Activated B cell treated with CpG ODN at 0.5 μM for 24 hours (primary cell): ENCODE measurements at regions of chr17 and their contacts with region 1.

Region 1: DNA sequence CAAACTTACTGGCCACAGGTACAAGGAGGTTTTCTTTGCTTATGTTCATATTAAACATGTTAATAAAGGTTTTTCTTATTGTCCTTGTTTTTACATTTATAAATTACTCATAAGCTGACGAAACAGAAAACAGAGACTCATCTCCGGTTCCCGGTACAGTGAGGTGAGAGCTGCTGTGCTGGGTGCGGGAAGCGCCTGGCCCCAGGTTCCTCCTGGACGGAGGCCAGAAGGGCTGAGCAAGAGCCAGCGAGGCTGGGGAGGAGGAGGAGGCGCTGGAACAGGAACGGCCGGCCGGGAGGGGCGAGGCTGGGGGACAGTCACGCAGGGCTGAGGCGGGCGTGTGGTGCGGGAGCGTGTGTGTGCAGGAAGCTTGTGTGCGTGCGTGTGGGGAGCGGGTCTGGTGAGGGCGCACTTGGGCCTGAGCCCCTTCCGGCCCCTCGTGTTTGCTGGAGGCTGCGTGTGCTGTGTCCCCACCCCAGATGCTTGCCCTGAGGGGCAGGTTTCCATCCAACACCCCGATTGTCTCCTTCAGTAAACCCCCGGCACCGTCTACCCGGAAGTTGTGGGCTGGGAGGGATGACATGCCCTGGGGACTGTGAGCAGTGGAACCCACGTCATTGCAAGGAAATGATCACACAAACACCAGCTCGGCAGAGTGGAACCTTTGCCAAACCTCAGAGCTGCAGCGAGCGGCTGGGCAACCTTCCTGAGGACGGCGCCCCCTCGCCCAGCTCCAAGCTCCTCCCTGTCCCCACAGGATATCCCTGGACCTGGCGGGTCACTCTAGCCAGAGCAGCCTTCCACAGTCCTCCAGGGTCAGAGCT is 19.5 kb downstream of the CD7 start:
- DNase-seq: peak; percentile 81
- ATAC-seq: peak; percentile 75
- H3K4me3 Mint-ChIP-seq: peak overlapping the region; percentile 97
- H3K27ac Mint-ChIP-seq: peak overlapping the region; percentile 100
- H3K4me1 Mint-ChIP-seq: peaks cover 76% of the 10 kb centered on the region
- H3K27me3 Mint-ChIP-seq: no peaks in the 10 kb centered on the region
- CTCF ChIP-seq: no peak

Region 2: GRCh38 chr17:82098072-82098821 is 199.7 kb before region 1 on chr17 and contains the start of gene FASN:
- CTCF ChIA-PET with region 1: no interaction called
- POLR2A ChIA-PET with region 1: interaction called, 14 read pairs
- intact Hi-C with region 1: loop called (anchors 1 kb)
- DNase-seq: peak; percentile 90
- ATAC-seq: peak; percentile 78
- H3K4me3 Mint-ChIP-seq: peak within 1 kb of the TSS; percentile 73
- H3K27ac Mint-ChIP-seq: no peak within 1 kb of the TSS
- H3K4me1 Mint-ChIP-seq: peaks cover 16% of the 10 kb centered on the region
- H3K27me3 Mint-ChIP-seq: no peaks in the 10 kb centered on the region
- CTCF ChIP-seq: no peak
- total RNA-seq, gene FASN: 104 and 121 TPM in 2 replicates

Region 3: DNA sequence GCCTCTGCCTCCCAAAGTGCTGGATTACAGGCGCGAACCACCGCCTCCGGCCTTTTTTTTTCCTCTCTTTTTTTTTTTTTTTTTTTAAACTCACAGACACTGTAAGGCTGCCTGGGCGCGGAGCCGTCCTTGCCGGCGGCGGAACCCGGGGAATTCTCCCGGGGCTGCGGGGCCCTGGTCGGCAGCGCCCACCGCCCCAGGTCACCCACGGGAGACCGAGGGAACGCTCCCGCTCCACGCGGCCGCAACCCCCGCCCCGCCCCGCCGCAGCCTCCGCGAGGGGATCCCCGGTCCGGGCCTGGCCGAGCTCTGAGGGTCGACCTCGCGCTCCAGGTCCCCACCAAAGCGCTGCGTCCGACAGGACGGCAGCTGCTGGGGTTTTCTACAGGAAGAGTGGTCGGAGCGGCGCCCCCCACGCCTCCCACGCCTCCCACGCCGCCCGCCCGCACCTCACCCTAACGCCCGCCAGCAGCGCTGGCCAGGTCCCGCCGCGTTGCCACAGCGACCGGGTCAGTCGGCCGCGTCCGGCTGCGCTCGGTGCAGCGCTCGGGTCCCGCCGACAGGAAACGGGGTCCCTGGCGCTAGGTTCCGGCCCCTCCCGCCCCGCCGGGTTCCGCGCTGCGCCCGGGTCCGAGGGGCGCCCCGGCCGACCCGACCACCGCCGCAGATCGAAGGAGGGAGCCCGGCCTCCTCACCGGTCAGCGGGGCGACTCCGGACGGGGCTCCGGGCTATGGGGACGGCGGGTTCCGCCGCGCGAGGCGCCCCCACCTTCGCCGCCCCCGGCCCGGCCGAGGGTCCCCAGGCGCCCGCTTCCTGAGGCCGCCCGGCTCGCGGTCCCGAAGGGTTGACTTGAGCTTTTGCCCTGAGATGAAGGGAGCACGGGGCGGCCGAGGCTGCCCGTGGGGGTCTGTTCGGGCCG is 85.3 kb before region 1 on chr17 and contains the start of gene CCDC57:
- CTCF ChIA-PET with region 1: no interaction called
- POLR2A ChIA-PET with region 1: interaction called, 28 read pairs
- intact Hi-C with region 1: loop called (anchors 1 kb)
- DNase-seq: peak; percentile 78
- ATAC-seq: peak; percentile 73
- H3K4me3 Mint-ChIP-seq: peak within 1 kb of the TSS; percentile 84
- H3K27ac Mint-ChIP-seq: peak within 1 kb of the TSS; percentile 91
- H3K4me1 Mint-ChIP-seq: peaks cover 43% of the 10 kb centered on the region
- H3K27me3 Mint-ChIP-seq: no peaks in the 10 kb centered on the region
- CTCF ChIP-seq: no peak
- total RNA-seq, gene CCDC57: 56.6 TPM in 2 replicates

Region 4: DNA sequence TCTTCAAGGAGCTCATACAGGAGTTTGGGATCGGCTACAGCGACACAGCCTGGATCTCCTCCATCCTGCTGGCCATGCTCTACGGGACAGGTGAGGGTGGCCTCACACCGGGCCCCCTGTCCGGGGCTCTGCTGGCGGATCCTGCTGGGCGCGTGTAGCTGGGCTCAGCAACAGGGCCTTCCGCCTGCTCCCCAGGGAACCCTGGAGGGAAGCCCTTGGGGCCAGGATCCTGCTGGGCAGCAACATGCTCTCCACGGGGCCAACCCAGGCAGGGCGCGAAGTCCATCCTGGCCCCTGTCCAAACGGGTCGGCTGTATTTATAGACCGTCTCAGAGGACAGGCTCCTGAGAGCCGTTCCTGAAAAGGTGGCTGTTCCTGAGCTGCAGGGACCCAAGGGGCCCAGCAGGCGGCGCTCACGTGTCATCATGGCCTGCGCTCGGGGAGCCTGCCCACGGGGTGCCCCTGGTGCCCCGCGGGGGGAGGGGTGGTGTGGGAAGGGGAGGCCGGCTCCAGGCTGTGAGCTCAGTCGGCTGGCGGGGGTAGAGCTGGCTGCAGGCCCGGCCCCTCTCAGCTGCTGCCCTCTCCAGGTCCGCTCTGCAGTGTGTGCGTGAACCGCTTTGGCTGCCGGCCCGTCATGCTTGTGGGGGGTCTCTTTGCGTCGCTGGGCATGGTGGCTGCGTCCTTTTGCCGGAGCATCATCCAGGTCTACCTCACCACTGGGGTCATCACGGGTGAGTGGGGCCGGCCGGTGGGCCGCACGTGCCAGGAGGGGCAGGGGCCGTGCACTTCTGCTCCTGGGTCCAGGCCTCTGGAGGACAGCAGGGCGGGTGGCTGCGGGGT is 61.6 kb before region 1 on chr17:
- CTCF ChIA-PET with region 1: interaction called, 12 read pairs
- POLR2A ChIA-PET with region 1: interaction called, 7 read pairs
- intact Hi-C with region 1: no loop called
- DNase-seq: peak; percentile 58
- ATAC-seq: peak; percentile 64
- H3K4me3 Mint-ChIP-seq: no peak overlapping the region
- H3K27ac Mint-ChIP-seq: no peak overlapping the region
- H3K4me1 Mint-ChIP-seq: peaks cover 53% of the 10 kb centered on the region
- H3K27me3 Mint-ChIP-seq: no peaks in the 10 kb centered on the region
- CTCF ChIP-seq: no peak

Region 5: DNA sequence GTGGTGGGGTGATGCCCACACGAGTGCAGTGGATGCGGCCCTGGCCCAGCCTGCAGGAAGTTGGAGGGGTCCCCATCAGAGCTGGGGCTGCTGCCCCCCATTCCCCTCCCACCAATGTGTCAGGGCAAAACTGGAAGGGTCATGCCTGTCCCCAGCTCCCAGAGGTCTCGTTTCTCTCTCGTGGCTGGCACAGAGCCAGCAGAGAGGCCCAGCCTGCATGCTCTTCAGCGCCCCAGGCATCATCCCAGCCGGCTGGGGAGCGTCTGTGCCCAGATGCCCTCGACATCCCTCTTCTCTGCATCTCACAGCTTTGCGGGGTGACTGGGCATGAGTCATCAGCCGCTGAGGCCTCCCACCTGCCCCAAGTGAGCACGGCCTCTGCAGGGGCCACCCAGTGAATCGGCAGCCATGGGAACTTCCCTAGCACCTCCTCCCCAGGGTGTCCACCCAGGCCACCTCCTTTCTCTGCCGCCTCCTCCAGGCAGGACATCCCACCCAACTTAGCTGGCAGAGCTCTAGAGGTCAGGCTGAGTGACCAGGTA is 14.6 kb before region 1 on chr17:
- CTCF ChIA-PET with region 1: no interaction called
- POLR2A ChIA-PET with region 1: interaction called, 19 read pairs
- intact Hi-C with region 1: no loop called
- DNase-seq: no peak
- ATAC-seq: no peak
- H3K4me3 Mint-ChIP-seq: no peak overlapping the region
- H3K27ac Mint-ChIP-seq: no peak overlapping the region
- H3K4me1 Mint-ChIP-seq: peaks cover 8% of the 10 kb centered on the region
- H3K27me3 Mint-ChIP-seq: peaks cover 2% of the 10 kb centered on the region
- CTCF ChIP-seq: no peak

Region 6: GRCh38 chr17:82320956-82321927 is 23.3 kb after region 1 on chr17:
- CTCF ChIA-PET with region 1: interaction called, 58 read pairs
- POLR2A ChIA-PET with region 1: interaction called, 40 read pairs
- intact Hi-C with region 1: loop called (anchors 1 kb)
- DNase-seq: peak; percentile 76
- ATAC-seq: peak; percentile 81
- H3K4me3 Mint-ChIP-seq: peak overlapping the region; percentile 73
- H3K27ac Mint-ChIP-seq: peak overlapping the region; percentile 56
- H3K4me1 Mint-ChIP-seq: peaks cover 3% of the 10 kb centered on the region
- H3K27me3 Mint-ChIP-seq: peaks cover 6% of the 10 kb centered on the region
- CTCF ChIP-seq: peak; percentile 48

Region 7: DNA sequence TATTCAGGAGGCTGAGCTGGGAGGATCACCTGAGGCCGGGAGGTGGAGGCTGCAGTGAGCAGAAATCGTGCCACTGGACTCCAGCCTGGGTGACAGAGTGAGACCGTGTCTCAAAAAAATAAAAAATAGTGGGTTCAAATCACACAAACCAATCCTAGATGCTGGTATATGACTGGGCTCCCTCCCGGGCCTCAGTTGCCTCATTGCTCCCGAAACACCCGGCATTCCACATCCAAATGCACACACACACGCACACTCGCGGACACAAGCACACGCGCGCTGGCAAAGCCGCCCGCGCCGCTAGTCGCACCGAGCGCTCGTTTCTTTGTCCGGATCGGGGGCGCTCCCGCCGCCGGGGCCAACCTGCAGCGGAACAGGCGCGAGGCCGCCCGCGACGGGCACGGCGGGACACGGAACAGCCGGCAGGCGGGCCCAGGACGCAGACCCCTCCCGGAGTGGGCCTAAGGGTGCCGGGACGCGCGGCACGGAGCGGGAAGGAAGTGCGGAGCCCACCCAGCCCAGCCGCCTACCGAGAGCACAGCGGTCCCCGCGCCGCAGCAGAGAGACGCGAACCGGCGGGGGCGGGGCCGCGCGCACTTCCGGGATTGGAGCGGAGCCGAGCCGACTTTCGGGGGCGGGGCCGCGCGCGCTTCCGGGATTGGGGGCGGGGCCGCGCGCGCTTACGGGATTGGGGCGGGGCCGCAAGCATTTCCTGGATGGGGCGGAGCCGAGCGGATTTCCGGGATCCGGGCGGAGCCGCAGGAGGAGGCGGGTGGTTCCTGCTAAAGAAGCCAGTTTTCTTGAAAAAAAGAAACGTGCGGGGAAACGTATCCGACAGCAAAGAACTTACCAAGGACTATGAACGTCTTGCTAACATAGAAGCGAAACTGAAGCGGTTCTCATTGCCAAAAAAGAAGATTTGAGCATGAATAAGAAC is 152.5 kb after region 1 on chr17 and contains the start of gene CYBC1:
- CTCF ChIA-PET with region 1: no interaction called
- POLR2A ChIA-PET with region 1: interaction called, 37 read pairs
- intact Hi-C with region 1: loop called (anchors 1 kb)
- DNase-seq: peak; percentile 96
- ATAC-seq: peak; percentile 42
- H3K4me3 Mint-ChIP-seq: peak within 1 kb of the TSS; percentile 94
- H3K27ac Mint-ChIP-seq: peak within 1 kb of the TSS; percentile 97
- H3K4me1 Mint-ChIP-seq: peaks cover 42% of the 10 kb centered on the region
- H3K27me3 Mint-ChIP-seq: no peaks in the 10 kb centered on the region
- CTCF ChIP-seq: no peak
- total RNA-seq, gene CYBC1: 405 and 501 TPM in 2 replicates